ENCODE measurements at regions of chr12 and their contacts with region 1.

Region 1: DNA sequence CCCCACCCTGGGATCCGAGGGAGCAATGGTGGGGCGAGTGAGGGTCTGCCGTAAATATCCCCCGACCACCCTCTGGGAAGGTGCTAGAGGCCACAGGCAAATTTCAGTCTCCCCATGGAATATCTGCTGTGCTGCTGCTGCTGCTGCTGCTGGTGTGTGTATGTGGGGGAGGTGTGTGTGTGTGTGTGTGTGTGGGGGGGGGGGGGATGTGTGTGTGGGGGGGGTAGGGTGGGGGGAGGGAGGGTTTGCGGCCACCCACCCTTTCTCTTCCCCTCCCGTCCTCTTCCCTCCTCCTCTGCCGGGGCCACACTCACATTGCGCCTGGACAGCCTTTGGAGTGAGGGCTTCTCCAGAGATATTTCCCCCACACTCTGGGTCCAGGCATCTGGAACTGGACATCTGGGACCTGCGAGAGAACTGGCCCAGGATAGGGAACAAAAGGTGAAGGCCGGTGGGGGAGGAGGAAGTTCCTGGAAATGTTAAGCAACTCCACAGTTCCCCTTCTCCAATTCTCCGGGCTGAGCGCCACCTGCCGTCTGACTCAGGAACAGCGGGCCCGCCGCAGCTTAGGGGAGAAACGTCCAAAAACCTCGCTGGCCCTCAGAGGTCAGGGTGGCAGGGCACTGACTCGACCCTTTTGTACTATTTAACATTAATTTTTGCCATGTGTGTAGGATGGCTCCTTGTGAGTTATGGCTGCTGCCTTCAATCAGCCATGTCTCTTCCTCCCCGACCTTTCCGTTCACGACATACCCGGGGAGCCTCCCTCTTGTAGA is at the start of gene C1RL:
- DNase-seq: peak; percentile 74
- H3K4me3 ChIP-seq: peak within 1 kb of the TSS; percentile 23 to 64 (median 39)
- H3K27ac ChIP-seq: peak within 1 kb of the TSS; percentile 61
- H3K4me1 ChIP-seq: peaks cover 8% of the 10 kb centered on the region
- H3K27me3 ChIP-seq: no peaks in the 10 kb centered on the region
- CTCF ChIP-seq: peak; percentile 97 to 98
- POLR2A ChIP-seq: no peak
- total RNA-seq, gene C1RL: 22.5 and 25.0 TPM in 2 replicates

Region 2: DNA sequence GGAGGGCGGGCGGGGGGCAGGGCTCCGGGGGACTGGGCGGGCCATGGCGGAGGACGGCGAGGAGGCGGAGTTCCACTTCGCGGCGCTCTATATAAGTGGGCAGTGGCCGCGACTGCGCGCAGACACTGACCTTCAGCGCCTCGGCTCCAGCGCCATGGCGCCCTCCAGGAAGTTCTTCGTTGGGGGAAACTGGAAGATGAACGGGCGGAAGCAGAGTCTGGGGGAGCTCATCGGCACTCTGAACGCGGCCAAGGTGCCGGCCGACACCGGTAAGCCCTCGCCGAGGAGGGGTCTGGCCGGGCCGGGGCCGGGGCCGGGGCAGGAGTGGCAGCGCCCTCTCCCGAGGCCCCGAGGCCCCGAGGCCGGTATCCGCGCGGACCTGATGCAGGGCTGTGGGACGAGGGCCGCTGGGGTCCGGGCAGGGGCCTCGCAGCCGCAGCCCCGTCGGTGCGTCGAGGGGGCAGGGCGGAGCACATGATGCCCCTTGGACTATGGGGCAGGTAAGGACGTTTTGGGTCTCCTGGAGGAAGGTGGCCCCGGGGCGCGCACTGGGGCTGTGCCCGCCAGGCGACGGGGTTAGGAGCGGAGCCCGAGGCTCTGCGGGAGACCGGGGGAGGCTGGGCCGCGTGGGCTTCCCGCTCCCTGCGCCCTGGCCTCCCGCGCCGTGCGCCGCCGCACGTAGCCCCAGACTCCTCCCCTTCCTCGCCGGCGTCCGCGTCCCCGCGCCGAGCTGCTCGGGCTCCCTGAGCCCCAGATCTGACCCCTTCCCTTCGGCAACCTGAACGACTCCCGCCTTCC is 241.4 kb before region 1 on chr12 and contains the start of gene TPI1:
- CTCF ChIA-PET with region 1: interaction called, 21 read pairs
- POLR2A ChIA-PET with region 1: no interaction called
- dilution Hi-C with region 1: no loop called
- intact Hi-C with region 1: loop called (anchors 5 kb)
- DNase-seq: peak; percentile 78
- H3K4me3 ChIP-seq: peak within 1 kb of the TSS; percentile 60 to 95 (median 75)
- H3K27ac ChIP-seq: peak within 1 kb of the TSS; percentile 43
- H3K4me1 ChIP-seq: peaks cover 32% of the 10 kb centered on the region
- H3K27me3 ChIP-seq: no peaks in the 10 kb centered on the region
- CTCF ChIP-seq: no peak
- POLR2A ChIP-seq: peak; percentile 98
- total RNA-seq, gene TPI1: 643 and 676 TPM in 2 replicates

Region 3: DNA sequence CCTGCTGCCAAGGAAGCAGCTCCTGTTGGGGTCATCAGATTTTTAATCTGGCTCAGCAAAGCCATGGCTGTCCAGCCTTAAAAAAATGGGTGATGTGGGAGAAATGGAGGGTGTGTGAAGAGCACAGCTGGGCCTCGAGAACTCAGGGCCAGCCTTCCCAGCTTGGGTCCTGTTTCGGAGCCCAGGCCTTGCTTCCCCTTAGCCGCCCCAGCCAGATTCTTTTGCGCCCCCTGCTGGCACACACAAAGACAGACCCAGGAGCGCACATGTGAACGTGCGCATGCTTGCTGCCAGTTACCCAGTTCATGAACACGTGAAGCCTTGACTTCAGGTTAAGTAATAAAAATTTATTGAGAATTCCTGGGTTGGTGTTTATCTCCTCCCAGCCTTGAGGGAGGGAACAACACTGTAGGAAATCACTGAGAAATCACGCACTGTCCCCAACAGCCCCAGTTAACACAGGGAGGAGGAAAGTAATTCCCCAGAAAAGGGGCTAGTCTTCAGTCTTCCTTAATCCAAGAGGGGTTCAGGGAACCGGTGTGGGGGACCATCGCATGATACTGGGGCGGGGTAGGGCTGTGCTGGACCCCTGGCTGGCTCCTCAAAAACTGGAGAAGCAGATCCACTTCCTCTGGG is 143.8 kb before region 1 on chr12:
- CTCF ChIA-PET with region 1: interaction called, 5 read pairs
- POLR2A ChIA-PET with region 1: no interaction called
- dilution Hi-C with region 1: no loop called
- intact Hi-C with region 1: loop called (anchors 2 kb)
- DNase-seq: peak; percentile 80
- H3K4me3 ChIP-seq: no peak overlapping the region
- H3K27ac ChIP-seq: no peak overlapping the region
- H3K4me1 ChIP-seq: peaks cover 23% of the 10 kb centered on the region
- H3K27me3 ChIP-seq: no peaks in the 10 kb centered on the region
- CTCF ChIP-seq: peak; percentile 89 to 92
- POLR2A ChIP-seq: no peak

Region 4: GRCh38 chr12:7047306-7047705 is 61.7 kb before region 1 on chr12:
- CTCF ChIA-PET with region 1: no interaction called
- POLR2A ChIA-PET with region 1: no interaction called
- dilution Hi-C with region 1: no loop called
- intact Hi-C with region 1: no loop called
- DNase-seq: peak; percentile 12
- H3K4me3 ChIP-seq: no peak overlapping the region
- H3K27ac ChIP-seq: no peak overlapping the region
- H3K4me1 ChIP-seq: peaks cover 6% of the 10 kb centered on the region
- H3K27me3 ChIP-seq: peaks cover 0 to under 1% of the 10 kb centered on the region in 2 experiments
- CTCF ChIP-seq: no peak
- POLR2A ChIP-seq: no peak

Region 5: DNA sequence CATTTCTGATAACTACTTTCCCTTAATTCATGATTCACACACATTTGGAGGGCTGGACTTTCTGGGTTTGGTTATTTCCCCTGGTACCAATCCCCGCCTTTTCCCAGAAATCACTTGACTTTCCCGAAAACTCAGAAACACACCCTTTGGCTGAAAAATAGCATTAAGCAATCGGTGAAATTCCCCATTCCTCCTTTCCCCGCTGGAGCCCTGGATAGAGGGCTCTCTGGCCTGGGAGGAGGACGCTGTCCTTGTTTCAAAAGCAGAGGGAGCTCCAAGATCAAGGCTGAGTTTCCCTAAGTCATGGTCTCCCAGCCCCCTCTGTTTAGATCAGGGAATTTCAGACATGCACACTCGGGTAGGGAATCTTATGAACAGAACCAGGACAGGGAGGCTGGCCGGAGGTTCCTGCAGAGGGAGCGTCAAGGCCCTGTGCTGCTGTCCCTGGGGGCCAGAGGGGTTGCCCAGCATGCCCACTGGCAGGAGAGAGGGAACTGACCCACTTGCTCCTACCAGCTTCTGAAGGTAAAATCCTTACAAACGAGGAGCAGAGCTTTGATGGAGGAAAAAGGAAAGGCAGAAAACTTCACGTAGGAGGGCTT is 48.5 kb before region 1 on chr12 and contains the start of gene C1S:
- CTCF ChIA-PET with region 1: interaction called, 21 read pairs
- POLR2A ChIA-PET with region 1: no interaction called
- dilution Hi-C with region 1: no loop called
- intact Hi-C with region 1: no loop called
- DNase-seq: peak; percentile 51
- H3K4me3 ChIP-seq: no peak within 1 kb of the TSS
- H3K27ac ChIP-seq: no peak within 1 kb of the TSS
- H3K4me1 ChIP-seq: no peaks in the 10 kb centered on the region
- H3K27me3 ChIP-seq: peaks cover 22 to 24% of the 10 kb centered on the region in 2 experiments
- CTCF ChIP-seq: peak in 1 of 2 donors; percentile 39
- POLR2A ChIP-seq: no peak
- total RNA-seq, gene C1S: 0.38 and 0.83 TPM in 2 replicates

Region 6: GRCh38 chr12:7122811-7123769 is 14.1 kb after region 1 on chr12:
- CTCF ChIA-PET with region 1: interaction called, 17 read pairs
- POLR2A ChIA-PET with region 1: no interaction called
- dilution Hi-C with region 1: no loop called
- intact Hi-C with region 1: no loop called
- DNase-seq: peak; percentile 4
- H3K4me3 ChIP-seq: no peak overlapping the region
- H3K27ac ChIP-seq: no peak overlapping the region
- H3K4me1 ChIP-seq: peaks cover 22% of the 10 kb centered on the region
- H3K27me3 ChIP-seq: no peaks in the 10 kb centered on the region
- CTCF ChIP-seq: no peak
- POLR2A ChIP-seq: no peak

Region 7: GRCh38 chr12:7583571-7583970 is 474.6 kb after region 1 on chr12:
- CTCF ChIA-PET with region 1: no interaction called
- POLR2A ChIA-PET with region 1: no interaction called
- dilution Hi-C with region 1: no loop called
- intact Hi-C with region 1: no loop called
- DNase-seq: no peak
- H3K4me3 ChIP-seq: no peak overlapping the region
- H3K27ac ChIP-seq: no peak overlapping the region
- H3K4me1 ChIP-seq: no peaks in the 10 kb centered on the region
- H3K27me3 ChIP-seq: peaks cover 2 to 3% of the 10 kb centered on the region in 2 experiments
- CTCF ChIP-seq: no peak
- POLR2A ChIP-seq: no peak